ENCODE measurements at regions of chr2 and their contacts with region 1.

Region 1: GRCh38 chr2:74178201-74179062 is at the start of gene MOB1A:
- DNase-seq: peak; percentile 85
- H3K4me3 ChIP-seq: peak within 1 kb of the TSS; percentile 77
- CTCF ChIP-seq: no peak

Region 2: DNA sequence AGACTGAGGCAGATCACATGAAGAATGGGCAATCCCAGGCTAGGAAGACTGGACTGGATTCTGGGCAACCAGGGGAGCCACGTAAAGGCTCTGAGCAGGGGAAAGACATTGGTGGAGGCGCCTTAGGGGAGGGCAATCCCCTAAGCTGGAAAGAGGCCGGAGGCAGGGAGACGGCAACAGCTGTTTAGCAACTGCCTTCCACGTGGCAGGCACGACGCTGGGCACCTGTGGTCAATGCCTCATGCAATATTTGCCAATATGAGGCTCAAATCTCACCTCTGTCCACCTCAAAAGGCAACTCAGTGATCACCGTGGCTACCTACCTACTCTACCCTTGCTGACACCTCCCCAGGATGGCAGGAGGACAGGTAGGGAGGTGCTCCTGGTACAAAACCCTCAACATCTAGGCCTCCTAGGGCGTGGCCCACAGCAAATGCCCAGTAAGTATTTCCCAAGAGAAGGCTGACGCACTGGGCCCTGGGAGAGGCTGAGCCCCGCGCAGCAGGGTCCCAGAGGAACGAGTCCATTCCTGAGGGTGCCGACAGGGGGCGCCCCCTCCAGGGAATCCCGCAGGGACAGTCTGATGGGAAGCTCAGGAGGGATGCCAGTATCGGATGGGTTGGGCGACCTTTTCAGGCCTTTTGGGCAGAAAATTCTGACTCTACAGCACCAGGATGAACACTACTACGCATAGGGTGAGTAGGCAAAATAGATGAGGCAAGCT is 39.7 kb before region 1 on chr2:
- CTCF ChIA-PET with region 1: no interaction called
- POLR2A ChIA-PET with region 1: no interaction called
- DNase-seq: no peak
- H3K4me3 ChIP-seq: no peak overlapping the region
- CTCF ChIP-seq: no peak

Region 3: GRCh38 chr2:74191596-74192380 is 13.4 kb after region 1 on chr2:
- CTCF ChIA-PET with region 1: interaction called, 31 read pairs
- POLR2A ChIA-PET with region 1: interaction called, 4 read pairs
- DNase-seq: no peak
- H3K4me3 ChIP-seq: no peak overlapping the region
- CTCF ChIP-seq: no peak

Region 4: GRCh38 chr2:74198461-74199274 is 20.2 kb after region 1 on chr2 and contains the start of gene MTHFD2:
- CTCF ChIA-PET with region 1: interaction called, 31 read pairs
- POLR2A ChIA-PET with region 1: interaction called, 29 read pairs
- DNase-seq: peak; percentile 85
- H3K4me3 ChIP-seq: peak within 1 kb of the TSS; percentile 99
- CTCF ChIP-seq: peak; percentile 97

Region 5: DNA sequence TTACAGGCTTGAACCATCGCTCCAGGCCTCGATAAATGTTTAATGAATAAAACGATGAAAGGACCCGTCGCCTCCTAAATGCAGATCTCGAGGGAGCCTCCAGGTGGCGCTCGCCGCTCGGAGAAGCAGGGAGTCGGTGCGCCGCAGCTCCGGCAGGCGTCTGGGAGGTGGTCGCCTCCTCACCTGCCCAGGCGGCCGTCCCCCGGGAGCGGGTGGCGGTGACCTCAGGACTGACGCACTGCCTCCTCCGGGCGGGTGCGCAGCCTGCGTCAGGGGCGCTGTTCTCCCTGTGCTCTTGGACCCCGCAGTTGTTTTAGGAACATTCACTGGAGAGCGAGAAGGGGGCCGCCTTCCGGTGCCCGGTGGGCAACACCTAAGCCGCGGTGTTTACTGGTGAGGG is 741.4 kb after region 1 on chr2:
- CTCF ChIA-PET with region 1: no interaction called
- POLR2A ChIA-PET with region 1: no interaction called
- DNase-seq: no peak
- H3K4me3 ChIP-seq: peak overlapping the region; percentile 57
- CTCF ChIP-seq: peak; percentile 86